Adrenal gland (tissue), 19 donors: ENCODE measurements at regions of chr9 and their contacts with region 1.

Region 1: GRCh38 chr9:19946441-19947109 is 157.7 kb upstream of the SLC24A2 start:
- DNase-seq: no peak
- H3K4me3 ChIP-seq: no peak overlapping the region
- H3K27ac ChIP-seq: no peak overlapping the region
- H3K4me1 ChIP-seq: no peaks in the 10 kb centered on the region
- H3K27me3 ChIP-seq: peaks cover 4% of the 10 kb centered on the region
- CTCF ChIP-seq: peak in 2 of 6 experiments; percentile 11 to 15
- POLR2A ChIP-seq: no peak

Region 2: GRCh38 chr9:19816769-19817168 is 129.8 kb before region 1 on chr9:
- intact Hi-C with region 1: no loop called
- DNase-seq: no peak
- H3K4me3 ChIP-seq: no peak overlapping the region
- H3K27ac ChIP-seq: no peak overlapping the region
- H3K4me1 ChIP-seq: no peaks in the 10 kb centered on the region
- H3K27me3 ChIP-seq: no peaks in the 10 kb centered on the region
- CTCF ChIP-seq: no peak
- POLR2A ChIP-seq: no peak

Region 3: GRCh38 chr9:19999491-20000057 is 53.0 kb after region 1 on chr9:
- intact Hi-C with region 1: loop called in 1 of 2 experiments (anchors 10 kb)
- DNase-seq: no peak
- H3K4me3 ChIP-seq: no peak overlapping the region
- H3K27ac ChIP-seq: no peak overlapping the region
- H3K4me1 ChIP-seq: no peaks in the 10 kb centered on the region
- H3K27me3 ChIP-seq: no peaks in the 10 kb centered on the region
- CTCF ChIP-seq: no peak
- POLR2A ChIP-seq: no peak